Natural killer cell (primary cell): ENCODE measurements at regions of chr12 and their contacts with region 1.

Region 1: GRCh38 chr12:118372541-118373495 is at the start of gene TAOK3:
- DNase-seq: peak; percentile 93 to 98
- ATAC-seq: peak; percentile 85 to 97 (median 87)
- H3K4me3 ChIP-seq: peak within 1 kb of the TSS; percentile 98
- H3K4me3 Mint-ChIP-seq: peak within 1 kb of the TSS; percentile 95
- H3K27ac ChIP-seq: peak within 1 kb of the TSS; percentile 86
- H3K27ac Mint-ChIP-seq: peak within 1 kb of the TSS; percentile 96 to 97
- H3K4me1 ChIP-seq: peaks cover 36% of the 10 kb centered on the region
- H3K4me1 Mint-ChIP-seq: peaks cover 37 to 63% of the 10 kb centered on the region in 2 donors
- H3K27me3 ChIP-seq: no peaks in the 10 kb centered on the region
- H3K27me3 Mint-ChIP-seq: peaks cover 0 to 3% of the 10 kb centered on the region in 2 donors
- CTCF ChIP-seq: no peak
- total RNA-seq, gene TAOK3: 155 to 166 (median 157) TPM

Region 2: DNA sequence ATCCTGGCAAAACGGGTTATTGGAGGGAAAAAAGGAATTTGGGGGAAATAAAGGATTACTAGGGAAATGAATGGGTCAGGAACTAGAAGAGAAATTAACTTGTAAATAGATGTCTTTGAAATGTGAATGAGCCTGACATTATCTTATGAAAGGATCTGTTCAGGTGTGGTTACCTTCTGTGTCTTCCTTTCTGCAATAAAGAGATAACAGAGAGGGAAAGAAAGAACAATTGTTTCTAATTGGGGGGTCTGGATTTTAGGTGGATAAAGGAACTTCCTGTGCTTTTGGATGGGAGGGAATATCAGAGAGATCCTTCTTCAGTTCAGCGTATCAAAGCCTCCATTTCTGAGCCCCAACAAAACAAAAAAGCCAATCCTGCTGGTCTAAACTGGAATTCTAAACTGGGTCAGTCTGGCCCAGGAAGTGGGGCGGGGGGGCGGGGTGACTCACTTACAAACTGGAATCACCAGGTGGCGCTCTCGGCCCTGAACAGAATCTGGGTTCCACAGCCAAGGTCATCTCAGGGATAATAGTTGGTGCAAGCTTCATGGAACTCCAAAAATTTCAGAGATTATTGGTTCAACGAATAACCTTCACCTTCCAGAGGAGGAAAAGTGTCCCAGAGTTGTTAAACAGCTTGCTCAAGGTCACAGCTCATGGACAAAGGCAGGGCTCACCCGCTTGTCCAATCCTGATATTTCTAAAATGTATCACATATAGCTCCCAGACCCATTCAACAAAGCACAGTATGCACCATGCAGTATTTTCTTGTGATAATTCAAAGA is 252.0 kb before region 1 on chr12:
- intact Hi-C with region 1: loop called (anchors 5 kb)
- DNase-seq: peak; percentile 47 to 78
- ATAC-seq: peak; percentile 73 to 93 (median 80)
- H3K4me3 ChIP-seq: no peak overlapping the region
- H3K4me3 Mint-ChIP-seq: no peak overlapping the region
- H3K27ac ChIP-seq: peak overlapping the region; percentile 31
- H3K27ac Mint-ChIP-seq: peak overlapping the region; percentile 62 to 71
- H3K4me1 ChIP-seq: no peaks in the 10 kb centered on the region
- H3K4me1 Mint-ChIP-seq: peaks cover 9 to 11% of the 10 kb centered on the region in 2 donors
- H3K27me3 ChIP-seq: no peaks in the 10 kb centered on the region
- H3K27me3 Mint-ChIP-seq: no peaks in the 10 kb centered on the region
- CTCF ChIP-seq: peak; percentile 87

Region 3: DNA sequence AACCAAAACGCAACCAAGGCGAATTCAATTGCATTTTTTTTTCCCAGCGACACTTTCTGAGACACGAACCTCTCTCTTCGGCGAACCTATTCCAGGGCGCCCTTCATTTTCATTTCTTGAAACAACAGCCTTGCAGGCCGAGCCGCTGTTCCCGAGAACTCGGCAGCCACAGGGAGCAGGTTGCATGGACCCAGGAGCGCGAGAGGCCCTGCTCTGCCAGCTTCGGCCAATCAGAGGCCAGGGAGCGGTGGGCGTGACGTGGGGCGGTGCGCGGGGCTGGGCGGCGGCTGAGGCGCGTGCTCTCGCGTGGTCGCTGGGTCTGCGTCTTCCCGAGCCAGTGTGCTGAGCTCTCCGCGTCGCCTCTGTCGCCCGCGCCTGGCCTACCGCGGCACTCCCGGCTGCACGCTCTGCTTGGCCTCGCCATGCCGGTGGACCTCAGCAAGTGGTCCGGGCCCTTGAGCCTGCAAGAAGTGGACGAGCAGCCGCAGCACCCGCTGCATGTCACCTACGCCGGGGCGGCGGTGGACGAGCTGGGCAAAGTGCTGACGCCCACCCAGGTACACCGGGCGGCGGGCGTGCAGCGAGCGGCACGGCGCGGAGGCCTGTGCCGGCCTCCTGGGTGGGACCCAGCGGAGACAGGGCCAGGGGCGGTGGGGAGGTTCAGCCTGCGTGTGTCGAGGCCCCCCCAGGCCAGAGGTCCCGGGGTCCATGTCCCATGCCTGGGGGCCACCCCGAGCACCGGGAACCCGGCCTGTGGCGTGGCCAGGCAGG is 236.8 kb before region 1 on chr12 and contains the start of gene PEBP1:
- intact Hi-C with region 1: loop called (anchors 5 kb)
- DNase-seq: peak; percentile 90 to 94
- ATAC-seq: peak; percentile 99 to 100 (median 100)
- H3K4me3 ChIP-seq: peak within 1 kb of the TSS; percentile 47
- H3K4me3 Mint-ChIP-seq: peak within 1 kb of the TSS; percentile 98
- H3K27ac ChIP-seq: peak within 1 kb of the TSS; percentile 32
- H3K27ac Mint-ChIP-seq: peak within 1 kb of the TSS; percentile 74 to 77
- H3K4me1 ChIP-seq: peaks cover 20% of the 10 kb centered on the region
- H3K4me1 Mint-ChIP-seq: peaks cover 6 to 19% of the 10 kb centered on the region in 2 donors
- H3K27me3 ChIP-seq: no peaks in the 10 kb centered on the region
- H3K27me3 Mint-ChIP-seq: no peaks in the 10 kb centered on the region
- CTCF ChIP-seq: no peak
- total RNA-seq, gene PEBP1: 38.0 to 54.0 (median 41.4) TPM

Region 4: GRCh38 chr12:118183705-118184104 is 189.1 kb before region 1 on chr12:
- intact Hi-C with region 1: loop called (anchors 1 kb)
- DNase-seq: no peak
- ATAC-seq: no peak
- H3K4me3 ChIP-seq: no peak overlapping the region
- H3K4me3 Mint-ChIP-seq: no peak overlapping the region
- H3K27ac ChIP-seq: no peak overlapping the region
- H3K27ac Mint-ChIP-seq: peak overlapping the region; percentile 16 to 85
- H3K4me1 ChIP-seq: no peaks in the 10 kb centered on the region
- H3K4me1 Mint-ChIP-seq: peaks cover 13 to 22% of the 10 kb centered on the region in 2 donors
- H3K27me3 ChIP-seq: no peaks in the 10 kb centered on the region
- H3K27me3 Mint-ChIP-seq: no peaks in the 10 kb centered on the region
- CTCF ChIP-seq: no peak

Region 5: GRCh38 chr12:118357257-118358007 is 15.4 kb before region 1 on chr12:
- intact Hi-C with region 1: loop called (anchors 1 kb)
- DNase-seq: peak; percentile 30 to 84
- ATAC-seq: peak; percentile 77 to 84 (median 81)
- H3K4me3 ChIP-seq: peak overlapping the region; percentile 73
- H3K4me3 Mint-ChIP-seq: peak overlapping the region; percentile 96
- H3K27ac ChIP-seq: peak overlapping the region; percentile 70
- H3K27ac Mint-ChIP-seq: peak overlapping the region; percentile 90 to 91
- H3K4me1 ChIP-seq: peaks cover 19% of the 10 kb centered on the region
- H3K4me1 Mint-ChIP-seq: peaks cover 57 to 70% of the 10 kb centered on the region in 2 donors
- H3K27me3 ChIP-seq: no peaks in the 10 kb centered on the region
- H3K27me3 Mint-ChIP-seq: no peaks in the 10 kb centered on the region
- CTCF ChIP-seq: peak; percentile 59

Region 6: GRCh38 chr12:119667577-119668323 is 1294.9 kb after region 1 on chr12 and contains the start of gene PRKAB1:
- intact Hi-C with region 1: loop called (anchors 10 kb)
- DNase-seq: peak; percentile 93 to 99
- ATAC-seq: peak; percentile 90 to 98 (median 92)
- H3K4me3 ChIP-seq: peak within 1 kb of the TSS; percentile 96
- H3K4me3 Mint-ChIP-seq: peak within 1 kb of the TSS; percentile 84
- H3K27ac ChIP-seq: peak within 1 kb of the TSS; percentile 93
- H3K27ac Mint-ChIP-seq: peak within 1 kb of the TSS; percentile 92
- H3K4me1 ChIP-seq: peaks cover 21% of the 10 kb centered on the region
- H3K4me1 Mint-ChIP-seq: peaks cover 51 to 63% of the 10 kb centered on the region in 2 donors
- H3K27me3 ChIP-seq: no peaks in the 10 kb centered on the region
- H3K27me3 Mint-ChIP-seq: no peaks in the 10 kb centered on the region
- CTCF ChIP-seq: peak; percentile 92
- total RNA-seq, gene PRKAB1: 21.8 to 34.6 (median 23.5) TPM